ENCODE measurements at regions of chr2 and their contacts with region 1.

Region 1: GRCh38 chr2:108605947-108606346 is 71.7 kb downstream of the LIMS1 start:
- DNase-seq: no peak
- H3K4me3 ChIP-seq: no peak overlapping the region
- H3K27ac ChIP-seq: peak overlapping the region; percentile 36 to 42
- H3K4me1 ChIP-seq: peaks cover 0 to 17% of the 10 kb centered on the region in 2 donors
- H3K27me3 ChIP-seq: no peaks in the 10 kb centered on the region
- CTCF ChIP-seq: no peak

Region 2: DNA sequence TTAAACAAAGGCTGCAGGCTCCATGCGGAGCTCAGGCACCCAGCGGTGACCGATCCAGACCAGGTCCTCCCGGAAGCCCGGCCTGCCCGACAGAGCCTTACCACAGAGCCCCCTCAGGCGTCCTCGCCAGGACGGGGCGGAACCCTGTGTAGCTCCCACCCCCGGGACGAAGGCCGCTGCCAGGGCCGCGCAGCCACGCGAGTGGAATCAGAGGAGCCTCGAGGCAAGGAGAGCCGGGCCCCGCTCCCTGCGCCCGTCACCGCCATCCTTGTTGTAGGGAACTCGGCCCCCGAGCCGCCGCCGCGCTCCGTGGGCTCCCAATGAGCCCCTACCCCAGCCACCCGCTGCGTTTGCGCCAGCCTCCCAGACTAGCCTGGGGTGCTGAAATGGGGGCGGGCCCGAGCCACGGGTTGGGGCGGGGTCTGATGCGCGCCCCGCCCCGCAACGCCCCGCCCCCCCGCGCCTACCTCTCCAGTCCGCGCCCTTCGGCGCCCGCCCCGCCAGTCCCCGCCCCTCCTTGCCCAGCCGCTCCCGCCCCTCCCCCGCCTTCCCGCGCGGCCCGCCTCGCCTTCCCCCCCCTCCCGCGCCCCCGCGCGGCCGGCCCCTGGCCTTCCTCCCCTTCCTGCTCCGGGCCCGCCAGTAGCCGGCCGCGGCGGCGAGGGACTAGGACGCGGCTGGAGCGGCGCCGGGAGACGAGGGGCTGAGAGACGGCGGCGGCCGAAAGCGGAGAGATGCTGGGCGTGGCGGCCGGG is 71.9 kb before region 1 on chr2 and contains the start of gene LIMS1:
- intact Hi-C with region 1: no loop called
- DNase-seq: peak; percentile 73 to 95
- H3K4me3 ChIP-seq: peak within 1 kb of the TSS; percentile 84 to 88
- H3K27ac ChIP-seq: peak within 1 kb of the TSS; percentile 84 to 91
- H3K4me1 ChIP-seq: peaks cover 0 to 17% of the 10 kb centered on the region in 2 donors
- H3K27me3 ChIP-seq: no peaks in the 10 kb centered on the region
- CTCF ChIP-seq: no peak
- total RNA-seq, gene LIMS1: 39.8 TPM

Region 3: GRCh38 chr2:108637304-108637669 is 31.3 kb after region 1 on chr2:
- intact Hi-C with region 1: loop called (anchors 1 kb)
- DNase-seq: peak; percentile 50 to 83
- H3K4me3 ChIP-seq: peak overlapping the region in 1 of 2 donors; percentile 4
- H3K27ac ChIP-seq: peak overlapping the region; percentile 46 to 80
- H3K4me1 ChIP-seq: peaks cover 11 to 47% of the 10 kb centered on the region in 2 donors
- H3K27me3 ChIP-seq: no peaks in the 10 kb centered on the region
- CTCF ChIP-seq: no peak